ENCODE measurements at regions of chr2 and their contacts with region 1.

Region 1: DNA sequence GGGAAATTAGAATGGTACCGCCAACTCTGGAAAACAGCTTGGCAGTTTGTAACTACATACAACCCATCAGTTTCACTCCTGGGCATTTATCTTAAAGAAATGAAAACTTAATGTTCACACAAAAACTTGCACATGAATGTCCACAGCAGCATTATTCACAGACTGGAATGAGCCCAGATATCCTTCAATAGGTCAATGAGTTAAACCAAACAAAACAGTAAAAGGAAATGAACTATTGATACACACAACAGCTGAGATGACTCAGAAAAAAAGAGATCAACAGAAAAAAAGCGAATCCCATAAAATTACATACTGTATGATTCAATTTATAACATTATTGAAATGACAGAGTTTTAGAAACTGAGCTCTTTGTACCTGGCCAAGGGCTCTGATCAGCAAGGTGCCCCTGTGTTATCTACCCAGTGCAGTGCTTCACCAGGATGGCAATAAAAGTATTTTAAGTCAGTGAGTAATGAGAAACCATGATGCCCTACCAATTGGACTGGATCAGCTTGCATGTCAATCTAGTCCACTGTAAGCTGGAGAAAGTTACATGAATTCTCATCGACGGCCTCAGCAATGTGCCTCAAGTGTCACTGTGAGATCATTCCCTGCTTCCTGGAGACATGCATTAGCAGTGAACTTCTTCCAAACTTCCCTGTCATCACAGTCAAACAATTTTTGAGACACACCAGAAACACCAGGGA is 21.9 kb downstream of the TMEM237 start:
- DNase-seq: no peak
- H3K4me3 ChIP-seq: no peak overlapping the region
- H3K27ac ChIP-seq: no peak overlapping the region
- H3K4me1 ChIP-seq: peaks cover 0 to 7% (median 5%) of the 10 kb centered on the region in 4 donors
- H3K27me3 ChIP-seq: no peaks in the 10 kb centered on the region
- CTCF ChIP-seq: no peak

Region 2: DNA sequence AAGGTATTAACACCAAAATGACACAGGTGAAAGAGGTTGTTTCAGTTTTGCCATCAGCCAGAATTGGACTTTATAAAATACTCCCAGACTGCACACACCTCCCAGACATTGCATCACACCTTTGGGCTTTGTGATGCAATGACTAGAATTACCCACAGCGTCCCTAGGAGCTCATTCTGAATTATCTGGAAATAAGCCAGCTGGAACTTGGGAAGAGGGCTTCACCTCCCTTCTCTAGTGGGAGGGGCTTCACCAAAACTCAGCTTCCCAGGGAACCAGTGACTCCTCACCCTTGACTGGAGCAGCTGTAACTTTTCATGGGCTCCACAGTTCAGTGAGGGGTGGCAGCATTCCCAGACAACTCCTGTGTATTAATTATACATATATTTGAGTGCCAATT is 892.8 kb before region 1 on chr2:
- intact Hi-C with region 1: no loop called
- DNase-seq: no peak
- H3K4me3 ChIP-seq: no peak overlapping the region
- H3K27ac ChIP-seq: no peak overlapping the region
- H3K4me1 ChIP-seq: no peaks in the 10 kb centered on the region
- H3K27me3 ChIP-seq: peaks cover 0 to 11% of the 10 kb centered on the region in 2 donors
- CTCF ChIP-seq: no peak

Region 3: GRCh38 chr2:201242571-201243277 is 378.7 kb before region 1 on chr2:
- intact Hi-C with region 1: loop called (anchors 10 kb)
- DNase-seq: no peak
- H3K4me3 ChIP-seq: no peak overlapping the region
- H3K27ac ChIP-seq: no peak overlapping the region
- H3K4me1 ChIP-seq: peaks cover 0 to 4% (median 0%) of the 10 kb centered on the region in 4 donors
- H3K27me3 ChIP-seq: no peaks in the 10 kb centered on the region
- CTCF ChIP-seq: no peak

Region 4: DNA sequence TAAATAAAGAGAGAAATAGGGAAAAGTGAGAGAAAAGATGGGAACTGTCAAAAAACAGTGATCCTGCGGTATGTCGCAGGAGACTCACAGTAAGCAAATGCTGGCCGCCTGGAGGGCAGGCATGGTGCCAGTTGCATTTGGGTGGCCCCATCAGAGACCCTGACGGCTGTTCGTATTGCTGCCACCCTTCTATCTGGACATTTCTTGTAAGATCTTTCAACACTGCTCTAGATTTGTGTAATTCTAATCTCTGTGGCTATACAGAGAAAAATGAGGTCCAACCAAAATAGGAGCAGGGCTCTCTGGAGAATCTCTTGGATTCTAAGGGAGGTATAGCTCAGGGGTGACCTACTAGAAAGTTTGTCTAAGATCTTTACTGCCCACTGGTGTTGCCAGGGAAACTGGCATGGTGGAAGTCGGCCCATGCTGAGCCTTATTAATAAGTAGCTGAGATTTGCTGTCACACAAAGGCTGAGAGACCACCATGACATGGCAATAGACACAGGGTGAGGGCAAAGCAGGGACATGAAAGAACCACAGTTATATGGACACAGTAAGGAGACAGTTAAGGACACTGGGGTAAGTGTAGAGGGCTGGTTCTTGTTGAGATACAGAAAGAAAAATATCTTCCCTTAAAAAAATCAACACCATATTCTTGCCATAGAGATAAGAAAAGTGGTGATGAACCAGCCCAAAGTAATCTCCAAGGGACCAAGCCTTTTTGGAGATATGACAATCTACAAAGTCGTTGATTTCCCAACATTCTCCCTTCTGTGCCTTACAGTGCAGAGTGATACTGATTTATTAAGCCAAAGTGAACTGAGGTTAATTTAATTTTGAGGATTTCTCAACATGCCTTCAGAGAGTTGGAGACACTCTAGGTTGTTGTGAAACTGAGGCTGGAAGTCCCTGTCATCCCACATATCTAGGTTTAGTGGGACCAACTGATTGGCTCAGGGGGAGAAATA is 385.9 kb after region 1 on chr2:
- intact Hi-C with region 1: no loop called
- DNase-seq: peak; percentile 51 to 70
- H3K4me3 ChIP-seq: no peak overlapping the region
- H3K27ac ChIP-seq: no peak overlapping the region
- H3K4me1 ChIP-seq: peaks cover 0 to 11% (median 0%) of the 10 kb centered on the region in 4 donors
- H3K27me3 ChIP-seq: no peaks in the 10 kb centered on the region
- CTCF ChIP-seq: no peak

Region 5: GRCh38 chr2:203238704-203239526 is 1617.5 kb after region 1 on chr2 and contains the start of gene CYP20A1:
- intact Hi-C with region 1: no loop called
- DNase-seq: peak; percentile 96 to 98
- H3K4me3 ChIP-seq: peak within 1 kb of the TSS; percentile 77 to 80
- H3K27ac ChIP-seq: peak within 1 kb of the TSS; percentile 94 to 95
- H3K4me1 ChIP-seq: peaks cover 0 to 21% (median 14%) of the 10 kb centered on the region in 4 donors
- H3K27me3 ChIP-seq: no peaks in the 10 kb centered on the region
- CTCF ChIP-seq: peak; percentile 44 to 49

Measured in tibial artery (tissue), 4 donors.